ENCODE measurements at regions of chr1 and their contacts with region 1.

Region 1: DNA sequence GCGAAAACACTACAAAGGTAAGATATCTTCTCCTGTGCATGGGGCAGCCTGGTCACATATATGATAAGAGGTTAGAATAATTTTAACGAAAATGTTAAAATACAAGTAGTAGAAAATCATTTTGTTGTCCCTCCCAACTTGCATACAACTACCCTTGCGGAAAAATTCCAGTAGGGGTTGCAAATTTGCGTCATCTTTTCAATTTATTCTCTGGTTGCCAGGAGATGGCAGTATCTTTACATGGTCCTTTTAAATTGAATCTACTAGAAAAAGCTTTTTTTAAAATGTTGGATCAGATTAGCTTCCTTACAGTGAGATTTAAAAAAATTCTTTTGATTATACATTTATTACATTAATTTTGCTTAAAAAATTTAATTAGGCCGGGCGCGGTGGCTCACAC is 10.9 kb downstream of the S100PBP start:
- DNase-seq: peak; percentile 7
- H3K4me3 ChIP-seq: no peak overlapping the region
- H3K27ac ChIP-seq: no peak overlapping the region
- H3K4me1 ChIP-seq: no peaks in the 10 kb centered on the region
- H3K27me3 ChIP-seq: no peaks in the 10 kb centered on the region
- CTCF ChIP-seq: peak in 1 of 2 donors; percentile 2
- POLR2A ChIP-seq: no peak

Region 2: GRCh38 chr1:32870615-32871363 is 42.4 kb after region 1 on chr1 and contains the start of gene FNDC5:
- CTCF ChIA-PET with region 1: interaction called, 9 read pairs
- POLR2A ChIA-PET with region 1: no interaction called
- dilution Hi-C with region 1: no loop called
- intact Hi-C with region 1: loop called (anchors 2 kb)
- DNase-seq: no peak
- H3K4me3 ChIP-seq: peak within 1 kb of the TSS in 1 of 3 experiments; percentile 36
- H3K27ac ChIP-seq: no peak within 1 kb of the TSS
- H3K4me1 ChIP-seq: no peaks in the 10 kb centered on the region
- H3K27me3 ChIP-seq: peaks cover 14 to 17% of the 10 kb centered on the region in 2 experiments
- CTCF ChIP-seq: no peak
- POLR2A ChIP-seq: no peak
- total RNA-seq, gene FNDC5: 0.64 TPM in 1 of 2 replicates, not detected in the other

Region 3: GRCh38 chr1:32981003-32981901 is 152.9 kb after region 1 on chr1:
- CTCF ChIA-PET with region 1: no interaction called
- POLR2A ChIA-PET with region 1: no interaction called
- dilution Hi-C with region 1: no loop called
- intact Hi-C with region 1: no loop called
- DNase-seq: peak; percentile 96
- H3K4me3 ChIP-seq: no peak overlapping the region
- H3K27ac ChIP-seq: peak overlapping the region; percentile 88
- H3K4me1 ChIP-seq: peaks cover 27% of the 10 kb centered on the region
- H3K27me3 ChIP-seq: no peaks in the 10 kb centered on the region
- CTCF ChIP-seq: no peak
- POLR2A ChIP-seq: no peak

Measured in endothelial cell of umbilical vein (primary cell).